ENCODE measurements at regions of chr1 and their contacts with region 1.

Region 1: DNA sequence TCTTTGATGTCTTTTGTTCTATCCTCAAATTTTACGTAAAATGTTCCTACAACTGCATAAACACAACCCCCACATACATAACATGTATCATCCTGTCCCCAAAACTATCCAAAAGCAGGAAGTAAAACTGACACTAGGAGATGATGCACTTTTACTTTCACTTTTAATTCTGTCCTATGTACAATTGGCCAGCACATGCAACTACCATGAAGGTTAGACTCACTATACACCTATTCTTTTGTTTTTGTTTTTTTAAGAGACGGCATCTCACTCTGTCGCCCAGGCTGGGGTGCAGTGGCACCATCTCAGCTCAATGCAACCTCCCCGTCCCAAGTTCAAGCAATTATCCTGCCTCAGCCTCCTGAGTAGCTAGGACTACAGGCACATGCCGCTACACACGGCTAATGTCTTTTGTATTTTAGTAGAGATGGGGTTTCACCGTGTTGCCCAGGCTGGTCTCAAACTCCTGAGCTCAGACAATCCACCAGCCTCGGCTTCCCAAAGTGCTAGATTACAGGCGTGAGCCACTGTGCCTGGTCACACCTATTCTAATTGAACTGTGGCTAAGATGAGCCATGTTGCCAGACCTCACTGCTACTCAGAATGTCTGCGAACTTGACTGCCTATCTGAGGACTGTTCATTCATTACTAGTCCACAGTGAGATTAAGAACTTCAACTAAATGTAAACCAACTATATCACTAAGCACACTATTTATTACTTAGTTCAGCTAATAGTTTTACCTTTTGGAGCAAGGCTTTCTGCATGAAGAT is 48.0 kb downstream of the TOR3A start:
- DNase-seq: no peak
- H3K4me3 Mint-ChIP-seq: peak overlapping the region; percentile 64
- H3K27ac Mint-ChIP-seq: peak overlapping the region; percentile 88
- H3K4me1 Mint-ChIP-seq: peaks cover 18% of the 10 kb centered on the region
- H3K27me3 Mint-ChIP-seq: no peaks in the 10 kb centered on the region

Region 2: GRCh38 chr1:179034720-179035119 is 95.2 kb before region 1 on chr1:
- intact Hi-C with region 1: loop called (anchors 1 kb)
- DNase-seq: no peak
- H3K4me3 Mint-ChIP-seq: no peak overlapping the region
- H3K27ac Mint-ChIP-seq: peak overlapping the region; percentile 82
- H3K4me1 Mint-ChIP-seq: peaks cover 80% of the 10 kb centered on the region
- H3K27me3 Mint-ChIP-seq: no peaks in the 10 kb centered on the region

Region 3: DNA sequence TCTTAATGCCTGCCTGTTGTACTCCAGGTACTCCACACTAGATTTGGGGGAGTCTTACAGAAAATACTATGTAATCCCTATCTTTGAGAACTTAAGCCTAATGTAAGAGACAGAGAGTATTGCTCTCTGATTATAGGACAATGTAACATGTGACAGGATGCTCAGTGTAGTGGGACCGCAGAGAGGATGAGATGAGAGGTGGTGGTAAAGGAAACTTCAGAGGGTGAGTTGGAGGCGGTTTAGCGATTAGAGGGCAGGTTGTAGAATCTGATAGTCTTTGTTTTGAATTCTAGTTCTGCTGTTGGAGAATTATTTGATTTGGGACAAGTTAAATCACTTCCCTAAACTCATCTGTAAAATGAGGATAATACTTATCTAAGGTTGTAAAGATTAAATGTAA is 169.1 kb after region 1 on chr1:
- intact Hi-C with region 1: loop called (anchors 2 kb)
- DNase-seq: peak; percentile 51
- H3K4me3 Mint-ChIP-seq: peak overlapping the region; percentile 6
- H3K27ac Mint-ChIP-seq: peak overlapping the region; percentile 49
- H3K4me1 Mint-ChIP-seq: peaks cover 67% of the 10 kb centered on the region
- H3K27me3 Mint-ChIP-seq: no peaks in the 10 kb centered on the region

Measured in activated T-helper 1 cell treated with anti-CD3 and anti-CD28 coated beads, Interleukin-12 subunit alpha, Interleukin-12 subunit beta, Interleukin-2, Interleukin-4 antibody, amounts not matched to agents 30 ng/mL and 10 ng/mL and 1 ng/mL, durations not matched to agents 14 hours and 24 hours and 36 hours (primary cell).